Mammary epithelial cell (primary cell): ENCODE measurements at regions of chr15 and their contacts with region 1.

Region 1: DNA sequence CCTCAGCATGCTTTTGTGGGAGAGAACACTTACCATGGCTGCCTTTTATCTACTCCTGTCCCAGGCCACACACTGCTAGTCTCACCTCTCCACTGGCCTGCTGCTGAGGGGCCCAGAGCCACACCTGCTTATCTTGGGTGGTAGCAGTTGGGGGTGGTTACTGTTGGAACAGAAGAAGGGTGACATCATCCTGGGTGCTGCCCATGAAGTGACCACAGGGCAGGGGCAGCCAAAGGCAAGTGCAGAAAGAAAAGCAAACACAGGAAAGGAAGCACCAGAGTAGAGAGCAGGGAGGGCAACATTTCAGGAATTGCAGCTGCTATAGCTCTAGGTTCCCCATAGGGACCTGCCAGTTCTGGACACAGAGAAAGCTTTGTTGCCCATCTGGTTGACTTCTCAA is 345.2 kb downstream of the VPS13C start:
- DNase-seq: peak; percentile 69
- H3K4me3 ChIP-seq: no peak overlapping the region
- H3K27ac ChIP-seq: no peak overlapping the region
- H3K4me1 ChIP-seq: peaks cover 7% of the 10 kb centered on the region
- H3K27me3 ChIP-seq: no peaks in the 10 kb centered on the region
- CTCF ChIP-seq: no peak

Region 2: GRCh38 chr15:61660579-61660978 is 54.5 kb before region 1 on chr15:
- CTCF ChIA-PET with region 1: no interaction called
- dilution Hi-C with region 1: loop called (anchors 10 kb)
- in situ Hi-C with region 1: no loop called
- intact Hi-C with region 1: no loop called
- DNase-seq: peak; percentile 8
- H3K4me3 ChIP-seq: no peak overlapping the region
- H3K27ac ChIP-seq: no peak overlapping the region
- H3K4me1 ChIP-seq: no peaks in the 10 kb centered on the region
- H3K27me3 ChIP-seq: no peaks in the 10 kb centered on the region
- CTCF ChIP-seq: no peak